ENCODE measurements at regions of chr5 and their contacts with region 1.

Region 1: DNA sequence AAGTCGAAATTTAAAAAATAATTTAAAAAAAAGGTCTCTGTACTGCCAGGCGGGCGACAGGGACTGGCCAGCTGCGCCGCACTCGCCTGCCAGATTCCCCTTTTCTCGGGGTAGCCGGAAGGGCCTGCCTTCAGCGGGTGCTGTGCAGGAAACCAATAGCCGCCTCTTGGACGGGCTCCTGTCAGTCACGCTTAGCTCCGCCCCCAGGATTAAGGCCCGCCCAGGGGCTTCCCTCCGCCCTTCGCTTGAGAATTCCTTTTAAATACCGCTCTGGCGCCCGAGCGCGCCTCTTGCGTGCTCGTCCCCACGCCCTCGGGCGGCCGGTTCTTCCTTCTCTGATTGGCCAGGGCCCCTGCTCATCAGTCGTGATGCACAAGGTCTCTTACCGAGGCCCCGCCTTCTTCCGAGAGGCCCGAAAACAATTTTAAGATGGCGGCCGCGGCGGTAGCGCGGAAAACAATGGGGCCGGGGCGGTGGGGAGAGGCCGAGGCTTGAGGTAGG is at the start of gene MAML1:
- DNase-seq: peak; percentile 100
- ATAC-seq: peak; percentile 94
- H3K4me3 ChIP-seq: peak within 1 kb of the TSS; percentile 93
- H3K27ac ChIP-seq: peak within 1 kb of the TSS; percentile 86
- H3K4me1 ChIP-seq: peaks cover 11% of the 10 kb centered on the region
- H3K27me3 ChIP-seq: no peaks in the 10 kb centered on the region
- CTCF ChIP-seq: no peak
- POLR2A ChIP-seq: peak; percentile 84
- RAD21 ChIP-seq: no peak
- total RNA-seq, gene MAML1: 4.7 TPM in 2 replicates

Region 2: GRCh38 chr5:179486596-179487051 is 245.8 kb before region 1 on chr5:
- CTCF ChIA-PET with region 1: no interaction called
- POLR2A ChIA-PET with region 1: no interaction called
- dilution Hi-C with region 1: no loop called
- in situ Hi-C with region 1: no loop called
- intact Hi-C with region 1: no loop called
- DNase-seq: peak; percentile 65
- ATAC-seq: peak; percentile 76
- H3K4me3 ChIP-seq: no peak overlapping the region
- H3K27ac ChIP-seq: no peak overlapping the region
- H3K4me1 ChIP-seq: peaks cover 18% of the 10 kb centered on the region; the same call in 1 of the 2 replicates
- H3K27me3 ChIP-seq: peaks cover 2% of the 10 kb centered on the region; the same call in 1 of the 2 replicates
- CTCF ChIP-seq: no peak
- POLR2A ChIP-seq: no peak
- RAD21 ChIP-seq: no peak

Region 3: DNA sequence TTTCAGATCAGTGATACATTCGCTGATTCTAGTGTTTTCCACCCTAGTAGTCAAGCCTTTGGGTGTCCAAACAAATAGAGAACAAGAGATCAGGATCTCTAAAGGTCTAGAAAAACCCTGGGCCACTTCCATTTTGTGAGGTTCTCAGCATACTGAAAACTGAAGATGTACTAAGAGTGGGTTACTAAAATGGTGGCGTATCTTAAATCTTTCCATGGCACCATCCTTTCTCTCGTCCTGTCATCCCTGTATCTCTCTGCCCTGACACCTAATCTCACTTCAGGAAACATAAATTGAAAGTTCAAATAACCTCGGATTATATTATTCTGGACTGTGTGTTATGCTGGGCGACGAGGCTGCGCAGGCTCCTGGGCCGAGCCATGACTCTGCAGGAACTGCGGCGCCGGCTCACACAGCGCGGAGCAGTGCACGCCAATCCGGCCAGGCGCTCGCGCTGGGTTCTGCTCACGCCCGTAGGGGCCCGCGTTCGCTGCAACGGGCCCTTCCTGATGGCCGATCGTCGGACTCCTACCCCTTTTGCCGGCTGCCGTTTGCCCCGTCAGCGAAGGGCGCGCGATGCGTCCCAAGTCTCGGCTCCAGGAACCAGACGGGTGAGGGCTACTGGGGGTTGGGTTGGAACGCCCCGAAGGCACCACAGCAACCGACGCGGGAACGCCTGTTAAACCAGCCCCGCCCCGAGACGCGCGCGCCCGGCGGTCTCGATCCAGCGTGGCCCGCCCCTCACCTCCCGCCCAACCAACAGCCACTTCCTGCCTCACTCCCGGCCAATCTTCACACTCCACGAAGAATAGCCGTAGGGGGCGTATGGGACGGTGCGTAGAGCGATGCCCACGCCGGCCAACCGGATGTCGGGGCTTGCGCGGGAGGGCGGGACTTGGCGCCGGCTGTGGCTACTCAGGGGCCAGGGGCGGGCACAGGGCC is 34.2 kb before region 1 on chr5:
- CTCF ChIA-PET with region 1: no interaction called
- POLR2A ChIA-PET with region 1: no interaction called
- dilution Hi-C with region 1: no loop called
- in situ Hi-C with region 1: no loop called
- intact Hi-C with region 1: loop called (anchors 5 kb)
- DNase-seq: peak; percentile 99
- ATAC-seq: peak; percentile 92
- H3K4me3 ChIP-seq: peak overlapping the region; percentile 86
- H3K27ac ChIP-seq: peak overlapping the region; percentile 83
- H3K4me1 ChIP-seq: peaks cover 2% of the 10 kb centered on the region; the same call in 1 of the 2 replicates
- H3K27me3 ChIP-seq: no peaks in the 10 kb centered on the region
- CTCF ChIP-seq: no peak
- POLR2A ChIP-seq: peak; percentile 89
- RAD21 ChIP-seq: peak; percentile 17; the same call in 1 of the 2 replicates

Region 4: GRCh38 chr5:179763215-179763945 is 30.9 kb after region 1 on chr5:
- CTCF ChIA-PET with region 1: interaction called, 6 read pairs
- POLR2A ChIA-PET with region 1: no interaction called
- dilution Hi-C with region 1: no loop called
- in situ Hi-C with region 1: no loop called
- intact Hi-C with region 1: loop called (anchors 2 kb)
- DNase-seq: peak; percentile 91
- ATAC-seq: peak; percentile 77
- H3K4me3 ChIP-seq: no peak overlapping the region
- H3K27ac ChIP-seq: peak overlapping the region; percentile 90
- H3K4me1 ChIP-seq: peaks cover 39% of the 10 kb centered on the region
- H3K27me3 ChIP-seq: no peaks in the 10 kb centered on the region
- CTCF ChIP-seq: peak; percentile 93
- POLR2A ChIP-seq: no peak
- RAD21 ChIP-seq: peak; percentile 72

Region 5: DNA sequence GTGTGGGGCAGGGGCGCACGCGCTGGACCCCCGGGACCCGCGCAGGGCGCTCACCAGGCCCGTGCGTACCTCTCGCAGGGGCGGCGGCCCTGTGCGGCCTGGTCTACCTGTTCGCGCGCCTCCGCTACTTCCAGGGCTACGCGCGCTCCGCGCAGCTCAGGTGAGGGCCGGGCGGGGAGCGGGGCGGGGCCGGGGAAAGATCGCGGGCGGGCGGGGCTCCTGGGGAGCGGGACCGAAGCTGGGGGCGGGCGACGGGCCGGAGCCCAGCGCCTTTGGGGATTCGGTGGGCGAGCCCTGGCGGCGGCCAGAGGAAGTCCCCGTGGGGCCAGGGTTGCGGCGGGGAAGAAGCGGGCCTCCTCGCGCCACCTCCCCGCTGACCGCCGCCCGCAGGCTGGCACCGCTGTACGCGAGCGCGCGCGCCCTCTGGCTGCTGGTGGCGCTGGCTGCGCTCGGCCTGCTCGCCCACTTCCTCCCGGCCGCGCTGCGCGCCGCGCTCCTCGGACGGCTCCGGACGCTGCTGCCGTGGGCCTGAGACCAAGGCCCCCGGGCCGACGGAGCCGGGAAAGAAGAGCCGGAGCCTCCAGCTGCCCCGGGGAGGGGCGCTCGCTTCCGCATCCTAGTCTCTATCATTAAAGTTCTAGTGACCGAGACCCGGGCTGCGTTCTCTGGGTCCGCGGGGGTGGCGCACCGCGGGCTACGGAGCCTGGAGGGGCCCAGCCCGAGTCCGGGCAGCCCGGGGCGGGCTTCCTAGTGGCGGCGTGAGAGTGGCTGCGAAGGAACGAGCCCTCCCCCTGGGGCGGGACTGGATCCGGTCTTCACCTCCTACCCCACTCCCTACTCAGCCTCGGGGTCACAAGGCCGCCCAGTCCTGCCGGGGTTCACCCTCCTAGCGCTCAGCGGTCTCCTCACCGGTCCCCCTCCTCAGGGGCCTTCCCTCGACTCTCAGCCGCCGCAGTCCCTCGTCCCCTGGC is 63.7 kb after region 1 on chr5:
- CTCF ChIA-PET with region 1: no interaction called
- POLR2A ChIA-PET with region 1: no interaction called
- dilution Hi-C with region 1: no loop called
- in situ Hi-C with region 1: no loop called
- intact Hi-C with region 1: loop called (anchors 1 kb)
- DNase-seq: peak; percentile 78
- ATAC-seq: peak; percentile 88
- H3K4me3 ChIP-seq: peak overlapping the region; percentile 59
- H3K27ac ChIP-seq: peak overlapping the region; percentile 60
- H3K4me1 ChIP-seq: peaks cover 9% of the 10 kb centered on the region; the same call in 1 of the 2 replicates
- H3K27me3 ChIP-seq: no peaks in the 10 kb centered on the region
- CTCF ChIP-seq: peak; percentile 84
- POLR2A ChIP-seq: 0 out of 2 replicates have a peak, but pooled peaks have one; percentile 27
- RAD21 ChIP-seq: peak; percentile 64

Region 6: GRCh38 chr5:179821581-179822432 is 89.3 kb after region 1 on chr5:
- CTCF ChIA-PET with region 1: interaction called, 3 read pairs
- POLR2A ChIA-PET with region 1: no interaction called
- dilution Hi-C with region 1: no loop called
- in situ Hi-C with region 1: no loop called
- intact Hi-C with region 1: loop called (anchors 1 kb)
- DNase-seq: peak; percentile 90
- ATAC-seq: peak; percentile 62
- H3K4me3 ChIP-seq: peak overlapping the region; percentile 87
- H3K27ac ChIP-seq: peak overlapping the region; percentile 90
- H3K4me1 ChIP-seq: peaks cover 39% of the 10 kb centered on the region
- H3K27me3 ChIP-seq: no peaks in the 10 kb centered on the region
- CTCF ChIP-seq: no peak
- POLR2A ChIP-seq: peak; percentile 56; the same call in 1 of the 2 replicates
- RAD21 ChIP-seq: no peak